Activated CD4-positive, alpha-beta memory T cell treated with anti-CD3 and anti-CD28 coated beads, Interleukin-2, amount 10 ng/mL, durations not matched to agents 7 days and 5 days (primary cell): ENCODE measurements at regions of chr10 and their contacts with region 1.

Region 1: GRCh38 chr10:13371897-13372470 is 23.9 kb upstream of the SEPHS1 start:
- DNase-seq: peak; percentile 72
- H3K4me3 Mint-ChIP-seq: no peak overlapping the region
- H3K27ac Mint-ChIP-seq: no peak overlapping the region
- H3K4me1 Mint-ChIP-seq: no peaks in the 10 kb centered on the region
- H3K27me3 Mint-ChIP-seq: peaks cover 2% of the 10 kb centered on the region

Region 2: GRCh38 chr10:13440185-13441061 is 68.4 kb after region 1 on chr10:
- CTCF ChIA-PET with region 1: interaction called, 30 read pairs
- POLR2A ChIA-PET with region 1: interaction called, 4 read pairs
- DNase-seq: peak; percentile 62
- H3K4me3 Mint-ChIP-seq: no peak overlapping the region
- H3K27ac Mint-ChIP-seq: no peak overlapping the region
- H3K4me1 Mint-ChIP-seq: peaks cover 14% of the 10 kb centered on the region
- H3K27me3 Mint-ChIP-seq: peaks cover 52% of the 10 kb centered on the region

Region 3: GRCh38 chr10:13567030-13567429 is 195.0 kb after region 1 on chr10:
- CTCF ChIA-PET with region 1: no interaction called
- POLR2A ChIA-PET with region 1: no interaction called
- DNase-seq: no peak
- H3K4me3 Mint-ChIP-seq: no peak overlapping the region
- H3K27ac Mint-ChIP-seq: no peak overlapping the region
- H3K4me1 Mint-ChIP-seq: no peaks in the 10 kb centered on the region
- H3K27me3 Mint-ChIP-seq: peaks cover 10% of the 10 kb centered on the region